ENCODE measurements at regions of chr7 and their contacts with region 1.

Region 1: GRCh38 chr7:151351027-151351426 is 9.4 kb downstream of the NUB1 start:
- DNase-seq: no peak
- H3K4me3 ChIP-seq: no peak overlapping the region
- H3K27ac ChIP-seq: no peak overlapping the region
- H3K27me3 ChIP-seq: no peaks in the 10 kb centered on the region
- CTCF ChIP-seq: peak in 1 of 56 donors; percentile 6

Region 2: DNA sequence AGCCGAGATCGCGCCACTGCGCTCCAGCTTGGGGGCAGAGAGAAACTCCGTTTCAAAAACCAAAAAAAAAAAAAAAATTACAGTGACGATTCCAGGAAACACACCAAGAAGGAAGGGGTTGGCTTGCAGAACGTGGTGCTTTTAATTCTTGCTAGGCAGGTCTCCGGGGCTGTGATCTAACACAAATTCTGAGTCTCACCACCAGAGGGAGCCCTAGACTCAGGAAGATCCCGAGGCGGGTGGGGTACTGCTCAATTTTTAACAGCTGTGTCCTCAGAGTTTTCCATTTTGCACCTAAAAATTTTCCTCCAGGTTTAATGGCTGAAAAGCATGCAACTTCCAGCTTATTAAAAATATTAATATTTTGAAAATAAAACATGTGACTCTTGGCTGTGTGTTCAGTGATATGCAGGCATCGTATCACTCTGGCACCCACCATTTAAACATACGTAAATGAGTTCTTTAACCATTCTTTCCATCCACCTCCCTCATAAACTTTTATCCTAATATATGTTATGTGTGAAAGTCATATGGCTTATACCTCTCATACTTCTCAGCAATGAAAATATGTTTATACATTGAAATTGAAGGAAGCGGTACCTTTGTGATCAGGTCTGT is 35.9 kb before region 1 on chr7:
- intact Hi-C with region 1: loop called (anchors 1 to 2 kb)
- DNase-seq: peak; percentile 33 to 80 (median 63)
- H3K4me3 ChIP-seq: peak overlapping the region in 12 of 59 donors; percentile 3 to 35 (median 16)
- H3K27ac ChIP-seq: no peak overlapping the region
- H3K27me3 ChIP-seq: no peaks in the 10 kb centered on the region
- CTCF ChIP-seq: peak; percentile 70 to 96 (median 90)

Region 3: DNA sequence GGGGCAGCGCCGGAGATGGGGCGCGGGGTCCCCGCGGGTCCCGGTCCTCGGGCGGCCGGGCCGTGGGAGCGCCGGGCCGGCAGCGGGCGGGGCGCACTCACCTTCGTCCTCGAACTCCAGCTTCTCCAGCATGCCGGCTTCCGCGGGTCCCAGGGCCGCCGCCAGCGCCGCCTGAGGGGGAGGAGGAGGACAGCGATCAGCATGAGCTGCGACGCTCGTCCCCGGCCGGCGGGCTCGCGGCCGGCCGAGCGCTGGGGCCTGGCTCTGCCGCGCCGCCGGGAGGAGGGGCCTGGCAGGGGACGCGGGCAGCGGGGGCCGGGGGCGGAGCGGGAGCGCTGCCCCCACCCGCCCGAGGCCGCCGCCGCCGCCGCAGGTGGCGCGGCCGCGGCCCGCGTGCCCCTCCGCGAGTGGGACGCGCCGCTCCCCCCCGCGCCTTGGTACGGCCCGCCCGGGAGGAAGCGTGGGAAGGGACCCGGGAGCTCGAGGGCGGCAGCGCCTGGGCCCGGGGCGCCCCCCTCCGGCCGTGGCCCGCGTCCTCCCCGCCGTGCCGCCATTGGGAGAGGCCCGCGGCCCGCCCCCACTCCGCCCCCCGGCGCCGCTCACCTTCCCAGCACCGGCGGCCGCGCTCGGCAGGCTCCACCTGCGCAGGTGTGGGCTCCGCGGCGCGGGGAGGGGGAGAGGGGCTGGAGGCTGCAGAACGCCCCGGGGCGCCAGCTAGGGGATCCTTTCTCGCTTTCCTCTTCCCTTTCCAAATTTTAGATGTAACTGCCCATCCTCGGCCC is 281.1 kb after region 1 on chr7:
- intact Hi-C with region 1: no loop called
- DNase-seq: peak; percentile 47 to 85 (median 70)
- H3K4me3 ChIP-seq: peak overlapping the region; percentile 49 to 86 (median 74)
- H3K27ac ChIP-seq: peak overlapping the region; percentile 62 to 95 (median 89)
- H3K27me3 ChIP-seq: no peaks in the 10 kb centered on the region
- CTCF ChIP-seq: peak in 34 of 56 donors; percentile 9 to 64 (median 41)